ENCODE measurements at regions of chr15 and their contacts with region 1.

Region 1: GRCh38 chr15:45118131-45118588 is 4.0 kb downstream of the DUOXA2 start:
- H3K4me3 ChIP-seq: no peak overlapping the region
- H3K27ac ChIP-seq: no peak overlapping the region
- H3K4me1 ChIP-seq: no peaks in the 10 kb centered on the region
- CTCF ChIP-seq: peak; percentile 96

Region 2: DNA sequence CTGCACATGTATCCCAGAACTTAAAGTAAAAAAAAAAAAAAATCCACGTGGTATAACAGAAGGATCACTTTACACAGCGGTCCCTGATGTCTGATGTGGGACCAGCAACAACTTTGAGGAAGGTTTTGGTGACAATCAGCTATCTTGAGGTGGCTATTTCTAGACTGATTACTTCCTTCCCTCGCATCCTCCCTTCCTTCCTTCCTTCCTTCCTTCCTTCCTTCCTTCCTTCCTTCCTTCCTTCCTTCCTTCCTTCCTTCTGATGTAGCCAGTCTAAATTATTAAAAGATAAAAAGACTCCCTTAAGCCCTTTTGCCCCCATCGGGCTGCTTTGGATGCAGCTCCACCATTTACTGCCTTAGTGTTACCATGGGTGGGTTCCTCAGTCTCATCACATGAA is 80.2 kb before region 1 on chr15:
- CTCF ChIA-PET with region 1: interaction called, 10 read pairs
- POLR2A ChIA-PET with region 1: no interaction called
- H3K4me3 ChIP-seq: no peak overlapping the region
- H3K27ac ChIP-seq: no peak overlapping the region
- H3K4me1 ChIP-seq: no peaks in the 10 kb centered on the region
- CTCF ChIP-seq: no peak

Region 3: GRCh38 chr15:45133561-45133920 is 15.4 kb after region 1 on chr15:
- CTCF ChIA-PET with region 1: interaction called, 16 read pairs
- POLR2A ChIA-PET with region 1: no interaction called
- H3K4me3 ChIP-seq: no peak overlapping the region
- H3K27ac ChIP-seq: no peak overlapping the region
- H3K4me1 ChIP-seq: no peaks in the 10 kb centered on the region
- CTCF ChIP-seq: no peak

Region 4: GRCh38 chr15:45221967-45222366 is 103.8 kb after region 1 on chr15:
- CTCF ChIA-PET with region 1: no interaction called
- POLR2A ChIA-PET with region 1: no interaction called
- H3K4me3 ChIP-seq: no peak overlapping the region
- H3K27ac ChIP-seq: no peak overlapping the region
- H3K4me1 ChIP-seq: no peaks in the 10 kb centered on the region
- CTCF ChIP-seq: no peak

Region 5: DNA sequence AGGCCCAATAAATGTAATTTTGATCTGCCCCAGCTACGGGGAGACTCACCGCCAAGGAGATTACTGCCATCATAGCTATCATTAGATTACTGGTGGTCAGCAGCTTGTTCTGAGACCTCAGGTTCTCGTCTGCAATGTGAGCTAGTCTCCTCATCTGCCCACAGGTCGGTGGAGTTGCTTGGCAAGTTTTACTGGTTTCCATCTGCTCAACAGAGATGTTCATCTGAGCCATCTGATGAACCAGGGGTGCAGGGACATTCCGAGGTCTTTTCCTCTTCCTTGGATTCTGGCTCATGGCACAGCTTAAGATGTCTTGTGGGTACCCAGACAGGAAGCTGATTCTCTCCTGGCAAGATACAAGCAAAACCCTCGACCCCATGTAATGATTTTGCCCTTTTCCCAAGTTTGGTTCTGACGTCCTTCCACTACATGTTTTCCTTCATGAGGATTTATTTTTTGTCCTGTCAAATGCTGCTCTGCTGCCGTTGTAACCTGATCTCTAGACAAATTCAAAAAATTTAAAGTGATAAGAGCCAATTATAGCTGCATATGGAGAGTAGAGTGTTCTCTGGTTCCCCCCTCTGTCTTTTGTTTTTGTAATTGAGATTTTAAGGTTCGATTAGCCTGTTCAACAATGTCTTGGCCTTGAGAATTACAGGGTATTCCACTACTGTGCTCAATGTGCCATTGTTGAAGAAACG is 118.8 kb after region 1 on chr15:
- CTCF ChIA-PET with region 1: no interaction called
- POLR2A ChIA-PET with region 1: no interaction called
- H3K4me3 ChIP-seq: no peak overlapping the region
- H3K27ac ChIP-seq: no peak overlapping the region
- H3K4me1 ChIP-seq: no peaks in the 10 kb centered on the region
- CTCF ChIP-seq: no peak